Activated CD4-positive, alpha-beta T cell treated with anti-CD3 and anti-CD28 coated beads, Interleukin-2, amount 10 ng/mL, durations not matched to agents 7 days and 5 days (primary cell): ENCODE measurements at regions of chr12 and their contacts with region 1.

Region 1: GRCh38 chr12:7970475-7971252 is 34.7 kb upstream of the SLC2A3 start:
- DNase-seq: peak; percentile 88
- H3K4me3 Mint-ChIP-seq: peak overlapping the region; percentile 87
- H3K27ac Mint-ChIP-seq: peak overlapping the region; percentile 99
- H3K4me1 Mint-ChIP-seq: peaks cover 45% of the 10 kb centered on the region
- H3K27me3 Mint-ChIP-seq: no peaks in the 10 kb centered on the region

Region 2: DNA sequence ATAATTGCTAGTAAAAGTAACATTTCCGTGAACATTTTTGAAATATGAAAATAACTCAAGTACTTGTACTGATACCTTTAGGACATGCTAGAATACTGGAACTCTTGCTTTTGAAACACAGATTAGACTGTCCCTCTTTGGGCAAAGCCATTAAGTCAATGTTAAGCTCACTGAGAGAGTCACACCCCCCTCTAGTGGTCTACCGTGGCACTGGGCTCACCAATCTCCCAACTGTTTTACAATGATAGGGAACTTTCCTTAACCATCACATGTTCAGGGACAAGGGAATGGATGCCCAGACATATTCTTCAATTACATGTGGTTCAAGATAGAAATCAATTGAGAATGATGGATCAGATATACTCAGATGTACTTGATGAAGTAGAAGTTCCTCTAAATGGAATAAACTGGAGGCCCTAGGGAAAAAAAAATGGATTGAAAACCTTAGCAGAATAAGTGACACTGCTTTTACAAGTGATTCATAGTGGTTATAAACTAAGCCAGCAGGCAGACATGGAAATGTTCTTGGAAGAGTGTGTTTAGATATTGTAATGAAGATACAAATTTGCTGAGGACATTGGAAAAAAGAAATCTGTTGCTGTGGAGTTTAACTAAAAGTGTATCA is 163.7 kb before region 1 on chr12:
- CTCF ChIA-PET with region 1: no interaction called
- POLR2A ChIA-PET with region 1: no interaction called
- DNase-seq: peak; percentile 70
- H3K4me3 Mint-ChIP-seq: no peak overlapping the region
- H3K27ac Mint-ChIP-seq: no peak overlapping the region
- H3K4me1 Mint-ChIP-seq: no peaks in the 10 kb centered on the region
- H3K27me3 Mint-ChIP-seq: no peaks in the 10 kb centered on the region

Region 3: DNA sequence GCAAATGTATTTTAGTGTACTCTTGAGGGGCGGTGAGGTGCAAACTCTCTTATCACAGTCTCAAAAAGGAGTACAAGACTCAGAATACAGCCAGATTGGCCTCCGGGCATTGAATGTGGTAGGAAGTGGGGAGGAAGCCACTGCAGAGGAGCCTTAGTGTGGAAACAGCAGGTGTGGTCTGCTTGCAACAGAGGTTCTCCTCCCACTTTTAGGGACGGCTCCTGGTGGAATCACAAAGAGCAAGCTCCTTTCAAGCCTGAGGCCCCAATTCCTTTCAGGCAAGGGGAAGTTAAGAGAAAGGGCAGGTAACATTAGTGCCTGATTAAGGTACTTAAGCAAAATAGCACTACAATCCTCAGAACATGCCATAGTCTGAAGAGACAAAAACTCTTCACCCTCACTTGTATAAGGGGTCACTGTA is 11.0 kb before region 1 on chr12:
- CTCF ChIA-PET with region 1: interaction called, 10 read pairs
- POLR2A ChIA-PET with region 1: interaction called, 14 read pairs
- DNase-seq: peak; percentile 72
- H3K4me3 Mint-ChIP-seq: peak overlapping the region; percentile 83
- H3K27ac Mint-ChIP-seq: peak overlapping the region; percentile 90
- H3K4me1 Mint-ChIP-seq: peaks cover 50% of the 10 kb centered on the region
- H3K27me3 Mint-ChIP-seq: no peaks in the 10 kb centered on the region

Region 4: GRCh38 chr12:7989827-7990551 is 19.3 kb after region 1 on chr12:
- CTCF ChIA-PET with region 1: interaction called, 4 read pairs
- POLR2A ChIA-PET with region 1: interaction called, 10 read pairs
- DNase-seq: peak; percentile 84
- H3K4me3 Mint-ChIP-seq: peak overlapping the region; percentile 50
- H3K27ac Mint-ChIP-seq: peak overlapping the region; percentile 91
- H3K4me1 Mint-ChIP-seq: peaks cover 55% of the 10 kb centered on the region
- H3K27me3 Mint-ChIP-seq: no peaks in the 10 kb centered on the region